IMR-90 (cell line): ENCODE measurements at regions of chr1 and their contacts with region 1.

Region 1: GRCh38 chr1:216111842-216112241 is 311.4 kb downstream of the USH2A start:
- DNase-seq: peak; percentile 7
- ATAC-seq: no peak
- H3K4me3 ChIP-seq: no peak overlapping the region
- H3K27ac ChIP-seq: no peak overlapping the region
- H3K4me1 ChIP-seq: no peaks in the 10 kb centered on the region
- H3K27me3 ChIP-seq: no peaks in the 10 kb centered on the region
- CTCF ChIP-seq: peak; percentile 49
- POLR2A ChIP-seq: no peak
- RAD21 ChIP-seq: peak; percentile 30; the same call in 1 of the 2 replicates

Region 2: GRCh38 chr1:216566641-216567205 is 454.9 kb after region 1 on chr1:
- CTCF ChIA-PET with region 1: no interaction called
- POLR2A ChIA-PET with region 1: no interaction called
- dilution Hi-C with region 1: no loop called
- in situ Hi-C with region 1: no loop called
- intact Hi-C with region 1: loop called (anchors 5 kb)
- DNase-seq: peak; percentile 45
- ATAC-seq: peak; percentile 62
- H3K4me3 ChIP-seq: no peak overlapping the region
- H3K27ac ChIP-seq: no peak overlapping the region
- H3K4me1 ChIP-seq: no peaks in the 10 kb centered on the region
- H3K27me3 ChIP-seq: no peaks in the 10 kb centered on the region
- CTCF ChIP-seq: peak; percentile 56
- POLR2A ChIP-seq: no peak
- RAD21 ChIP-seq: peak; percentile 56

Region 3: GRCh38 chr1:216742625-216743024 is 630.8 kb after region 1 on chr1:
- CTCF ChIA-PET with region 1: no interaction called
- POLR2A ChIA-PET with region 1: no interaction called
- dilution Hi-C with region 1: no loop called
- in situ Hi-C with region 1: no loop called
- intact Hi-C with region 1: loop called (anchors 5 kb)
- DNase-seq: peak; percentile 30
- ATAC-seq: no peak
- H3K4me3 ChIP-seq: no peak overlapping the region
- H3K27ac ChIP-seq: no peak overlapping the region
- H3K4me1 ChIP-seq: no peaks in the 10 kb centered on the region
- H3K27me3 ChIP-seq: no peaks in the 10 kb centered on the region
- CTCF ChIP-seq: peak; percentile 53
- POLR2A ChIP-seq: no peak
- RAD21 ChIP-seq: peak; percentile 36